ENCODE measurements at regions of chr9 and their contacts with region 1.

Region 1: GRCh38 chr9:100030548-100030947 is 68.3 kb downstream of the ERP44 start:
- DNase-seq: no peak
- H3K4me3 ChIP-seq: no peak overlapping the region
- H3K27ac ChIP-seq: no peak overlapping the region
- H3K4me1 ChIP-seq: no peaks in the 10 kb centered on the region
- H3K27me3 ChIP-seq: no peaks in the 10 kb centered on the region
- CTCF ChIP-seq: no peak

Region 2: GRCh38 chr9:100216178-100216787 is 185.7 kb after region 1 on chr9:
- intact Hi-C with region 1: loop called (anchors 5 kb)
- DNase-seq: no peak
- H3K4me3 ChIP-seq: no peak overlapping the region
- H3K27ac ChIP-seq: no peak overlapping the region
- H3K4me1 ChIP-seq: no peaks in the 10 kb centered on the region
- H3K27me3 ChIP-seq: no peaks in the 10 kb centered on the region
- CTCF ChIP-seq: peak; percentile 41 to 44